B cell (primary cell): ENCODE measurements at regions of chr2 and their contacts with region 1.

Region 1: DNA sequence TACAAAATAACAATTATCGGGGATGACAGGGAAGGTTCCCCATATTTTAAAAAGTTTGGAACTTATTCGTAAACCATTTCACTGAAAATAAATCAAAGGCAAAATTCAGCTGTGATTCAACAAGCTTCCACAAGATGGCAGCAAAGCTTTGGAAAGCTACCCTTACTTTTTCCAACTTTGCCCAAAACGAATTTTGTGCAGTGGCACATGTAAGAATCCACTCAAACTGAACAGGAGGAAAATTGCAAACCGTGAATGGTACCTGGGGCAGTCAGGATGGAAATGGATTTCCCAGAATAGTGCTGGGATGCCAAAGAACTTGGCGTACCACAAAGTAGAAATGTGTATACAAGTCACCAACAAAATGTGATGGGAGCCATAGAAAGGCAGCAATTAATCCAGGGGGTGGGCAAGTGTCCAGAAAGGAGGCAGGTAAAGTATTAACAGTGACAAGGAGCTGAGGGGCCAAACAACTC is 10.7 kb downstream of the RPL31 start:
- DNase-seq: peak; percentile 59
- ATAC-seq: no peak
- H3K4me3 ChIP-seq: no peak overlapping the region
- H3K4me3 Mint-ChIP-seq: no peak overlapping the region
- H3K27ac ChIP-seq: no peak overlapping the region
- H3K27ac Mint-ChIP-seq: no peak overlapping the region
- H3K4me1 ChIP-seq: no peaks in the 10 kb centered on the region
- H3K4me1 Mint-ChIP-seq: peaks cover 3% of the 10 kb centered on the region
- H3K27me3 ChIP-seq: no peaks in the 10 kb centered on the region
- H3K27me3 Mint-ChIP-seq: no peaks in the 10 kb centered on the region
- CTCF ChIP-seq: peak; percentile 96

Region 2: DNA sequence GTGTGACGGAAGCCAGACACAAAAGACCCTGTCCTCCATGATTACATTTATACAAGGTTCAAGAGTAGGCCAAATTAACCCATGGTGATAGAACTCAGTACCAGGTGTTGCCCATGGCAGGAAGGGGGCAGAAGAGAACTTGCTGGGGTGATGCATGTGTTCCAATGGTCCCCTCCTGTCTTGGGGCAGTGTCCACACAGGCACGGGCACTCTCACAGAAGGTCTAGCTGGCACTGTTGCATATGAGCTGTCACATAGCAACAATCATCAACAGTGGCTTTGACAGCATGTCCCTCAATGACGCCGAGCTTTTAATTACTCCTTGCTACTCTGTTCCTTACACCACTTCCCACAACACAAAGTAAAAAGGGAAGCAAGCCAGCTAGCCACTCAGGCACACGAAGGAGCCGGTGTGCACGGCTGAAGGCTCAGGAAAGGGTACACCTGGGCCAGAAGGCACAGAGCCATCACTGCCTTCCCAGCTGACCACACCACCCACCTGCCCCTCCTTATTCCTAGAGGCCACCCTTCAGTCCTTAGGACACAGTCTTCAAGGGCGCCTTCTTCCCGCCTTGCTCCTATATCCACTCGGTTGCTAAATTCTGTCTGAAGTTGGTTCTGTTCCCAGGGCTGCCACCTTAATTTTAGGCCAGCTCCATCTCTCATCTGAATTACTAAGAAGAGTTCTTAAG is 18.3 kb after region 1 on chr2:
- CTCF ChIA-PET with region 1: interaction called, 11 read pairs
- POLR2A ChIA-PET with region 1: no interaction called
- intact Hi-C with region 1: no loop called
- DNase-seq: no peak
- ATAC-seq: no peak
- H3K4me3 ChIP-seq: no peak overlapping the region
- H3K4me3 Mint-ChIP-seq: no peak overlapping the region
- H3K27ac ChIP-seq: no peak overlapping the region
- H3K27ac Mint-ChIP-seq: no peak overlapping the region
- H3K4me1 ChIP-seq: no peaks in the 10 kb centered on the region
- H3K4me1 Mint-ChIP-seq: no peaks in the 10 kb centered on the region
- H3K27me3 ChIP-seq: peaks cover 0 to 3% (median 0%) of the 10 kb centered on the region in 4 experiments
- H3K27me3 Mint-ChIP-seq: peaks cover 4% of the 10 kb centered on the region
- CTCF ChIP-seq: no peak

Region 3: DNA sequence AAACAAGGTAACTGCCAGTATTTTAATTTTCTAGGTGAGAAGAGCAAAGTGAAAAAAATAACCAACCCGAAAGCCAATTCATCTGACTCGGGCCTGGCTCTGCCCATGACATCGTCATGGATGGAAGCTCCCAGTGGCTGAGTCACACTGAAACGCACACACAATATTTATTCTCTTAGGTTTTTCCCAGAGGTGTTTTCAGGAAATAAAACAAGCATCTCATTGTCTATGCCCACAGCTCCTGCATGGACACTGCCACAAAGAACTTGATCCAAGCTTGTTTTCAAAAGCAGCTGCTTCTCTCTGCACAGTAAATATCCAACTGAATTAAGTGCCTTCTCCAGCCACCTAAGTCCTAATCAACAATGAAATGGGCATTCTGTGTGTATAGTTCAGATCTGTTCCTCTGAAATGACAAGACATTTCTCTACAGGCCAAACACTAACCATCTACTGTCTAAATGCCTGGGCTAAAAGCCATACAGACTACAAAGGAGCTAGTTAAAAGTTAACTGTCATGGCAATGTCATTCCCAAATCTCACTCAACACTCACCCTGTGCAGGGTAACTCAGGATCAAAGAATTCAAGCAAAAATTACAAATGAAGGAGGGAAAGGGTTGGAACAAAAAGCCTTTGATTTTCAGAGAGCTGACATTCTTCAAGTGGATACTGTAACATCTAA is 52.3 kb after region 1 on chr2:
- CTCF ChIA-PET with region 1: no interaction called
- POLR2A ChIA-PET with region 1: no interaction called
- intact Hi-C with region 1: no loop called
- DNase-seq: no peak
- ATAC-seq: no peak
- H3K4me3 ChIP-seq: no peak overlapping the region
- H3K4me3 Mint-ChIP-seq: no peak overlapping the region
- H3K27ac ChIP-seq: no peak overlapping the region
- H3K27ac Mint-ChIP-seq: no peak overlapping the region
- H3K4me1 ChIP-seq: no peaks in the 10 kb centered on the region
- H3K4me1 Mint-ChIP-seq: no peaks in the 10 kb centered on the region
- H3K27me3 ChIP-seq: no peaks in the 10 kb centered on the region
- H3K27me3 Mint-ChIP-seq: no peaks in the 10 kb centered on the region
- CTCF ChIP-seq: no peak

Region 4: DNA sequence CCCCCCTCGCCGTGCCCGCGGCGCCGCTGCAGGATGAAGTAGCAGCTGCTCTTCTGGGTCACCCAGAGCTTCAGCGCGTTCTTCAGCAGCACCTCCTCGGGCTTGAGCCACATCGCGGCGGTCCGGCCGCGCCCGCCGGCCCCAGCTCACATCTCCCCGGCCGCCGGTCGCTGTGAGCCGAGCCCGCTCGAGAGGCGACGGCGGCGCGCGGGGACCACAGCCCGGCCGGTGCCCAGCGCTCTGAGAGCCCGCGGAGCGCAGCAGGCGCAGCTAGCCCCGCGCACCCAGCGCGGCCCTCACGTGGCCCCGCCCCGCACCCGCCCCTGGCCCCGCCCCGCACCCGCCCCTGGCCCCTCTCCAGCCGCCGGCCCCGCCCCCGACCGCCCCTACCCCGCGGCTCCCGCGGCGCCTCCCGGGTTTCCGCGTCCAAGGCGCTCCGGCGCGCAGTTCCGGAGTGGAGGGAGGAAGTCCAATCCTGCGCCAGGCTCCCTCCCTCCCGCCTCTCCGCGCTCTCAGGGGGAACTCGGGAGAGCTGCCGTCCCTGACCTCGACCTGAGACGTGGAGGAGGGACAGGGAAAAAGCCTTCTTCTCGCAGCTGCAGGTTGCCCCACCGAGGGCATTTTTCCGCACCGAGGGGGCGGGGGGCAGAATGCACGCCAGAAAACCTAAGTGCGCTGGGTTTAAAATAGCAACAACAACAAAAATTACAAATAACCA is 138.6 kb after region 1 on chr2 and contains the start of gene TBC1D8:
- CTCF ChIA-PET with region 1: interaction called, 17 read pairs
- POLR2A ChIA-PET with region 1: no interaction called
- intact Hi-C with region 1: loop called (anchors 1 kb)
- DNase-seq: peak; percentile 66
- ATAC-seq: peak; percentile 85
- H3K4me3 ChIP-seq: peak within 1 kb of the TSS; percentile 51 to 66 (median 57)
- H3K4me3 Mint-ChIP-seq: peak within 1 kb of the TSS; percentile 80
- H3K27ac ChIP-seq: no peak within 1 kb of the TSS
- H3K27ac Mint-ChIP-seq: peak within 1 kb of the TSS; percentile 46
- H3K4me1 ChIP-seq: peaks cover 23 to 29% of the 10 kb centered on the region in 2 donors
- H3K4me1 Mint-ChIP-seq: peaks cover 27% of the 10 kb centered on the region
- H3K27me3 ChIP-seq: peaks cover 0 to 26% (median 19%) of the 10 kb centered on the region in 4 experiments
- H3K27me3 Mint-ChIP-seq: peaks cover 24% of the 10 kb centered on the region
- CTCF ChIP-seq: no peak
- total RNA-seq, gene TBC1D8: 15.7 and 18.8 TPM in 2 replicates

Region 5: GRCh38 chr2:101205521-101205998 is 192.8 kb after region 1 on chr2:
- CTCF ChIA-PET with region 1: interaction called, 213 read pairs
- POLR2A ChIA-PET with region 1: interaction called, 3 read pairs
- intact Hi-C with region 1: loop called (anchors 1 kb)
- DNase-seq: peak; percentile 54
- ATAC-seq: peak; percentile 86
- H3K4me3 ChIP-seq: peak overlapping the region in 1 of 5 experiments; percentile 41
- H3K4me3 Mint-ChIP-seq: peak overlapping the region; percentile 66
- H3K27ac ChIP-seq: no peak overlapping the region
- H3K27ac Mint-ChIP-seq: peak overlapping the region; percentile 26
- H3K4me1 ChIP-seq: no peaks in the 10 kb centered on the region
- H3K4me1 Mint-ChIP-seq: peaks cover 7% of the 10 kb centered on the region
- H3K27me3 ChIP-seq: no peaks in the 10 kb centered on the region
- H3K27me3 Mint-ChIP-seq: peaks cover 4% of the 10 kb centered on the region
- CTCF ChIP-seq: peak; percentile 27

Region 6: DNA sequence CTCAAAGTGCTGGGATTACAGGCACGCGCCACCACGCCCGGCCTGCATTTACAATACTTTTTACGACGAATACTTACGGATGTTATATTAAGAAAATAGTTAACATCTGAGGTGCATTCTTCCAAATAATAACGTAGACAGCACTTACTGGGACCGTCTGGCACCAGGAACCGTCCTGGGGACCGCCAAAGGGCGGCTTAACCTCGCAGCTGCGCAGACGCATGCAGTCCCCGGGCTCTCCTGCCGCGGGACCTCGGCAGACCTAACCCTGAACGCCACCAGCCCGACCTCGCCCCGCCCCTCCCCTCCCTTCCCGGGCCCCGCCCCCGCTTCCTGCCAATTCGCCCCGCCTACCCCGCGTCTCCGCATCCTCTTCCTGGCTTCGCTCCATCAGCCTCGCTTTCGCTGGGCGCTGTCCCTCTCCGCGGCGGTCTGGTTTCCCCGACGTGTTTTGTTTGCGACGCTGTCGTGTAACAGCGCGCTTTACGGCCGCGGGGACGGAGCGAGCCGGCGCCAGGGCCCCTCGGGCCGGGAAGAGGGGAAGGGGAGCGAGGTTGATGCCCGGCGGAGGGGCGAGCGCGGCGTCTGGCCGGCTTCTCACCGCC is 239.8 kb after region 1 on chr2 and contains the start of gene CNOT11:
- CTCF ChIA-PET with region 1: interaction called, 11 read pairs
- POLR2A ChIA-PET with region 1: no interaction called
- intact Hi-C with region 1: no loop called
- DNase-seq: peak; percentile 99
- ATAC-seq: peak; percentile 85
- H3K4me3 ChIP-seq: peak within 1 kb of the TSS; percentile 68 to 91 (median 88)
- H3K4me3 Mint-ChIP-seq: peak within 1 kb of the TSS; percentile 95
- H3K27ac ChIP-seq: peak within 1 kb of the TSS; percentile 83 to 98
- H3K27ac Mint-ChIP-seq: peak within 1 kb of the TSS; percentile 92
- H3K4me1 ChIP-seq: peaks cover 20 to 30% of the 10 kb centered on the region in 2 donors
- H3K4me1 Mint-ChIP-seq: peaks cover 44% of the 10 kb centered on the region
- H3K27me3 ChIP-seq: no peaks in the 10 kb centered on the region
- H3K27me3 Mint-ChIP-seq: no peaks in the 10 kb centered on the region
- CTCF ChIP-seq: no peak
- total RNA-seq, gene CNOT11: 46.3 and 46.7 TPM in 2 replicates